ENCODE measurements at regions of chr16 and their contacts with region 1.

Region 1: GRCh38 chr16:89289428-89290395 is 72.2 kb downstream of the ZNF778 start:
- DNase-seq: peak; percentile 73 to 99
- ATAC-seq: peak; percentile 85 to 93
- H3K4me3 ChIP-seq: no peak overlapping the region
- H3K27ac ChIP-seq: peak overlapping the region in 1 of 2 experiments; percentile 42; a peak in 2 of 6 replicates
- H3K4me1 ChIP-seq: peaks cover 4% of the 10 kb centered on the region; the same call in 1 of the 3 replicates
- CTCF ChIP-seq: peak; percentile 82
- EP300 ChIP-seq: no peak
- POLR2A ChIP-seq: no peak
- RAD21 ChIP-seq: peak; percentile 70 to 73

Region 2: DNA sequence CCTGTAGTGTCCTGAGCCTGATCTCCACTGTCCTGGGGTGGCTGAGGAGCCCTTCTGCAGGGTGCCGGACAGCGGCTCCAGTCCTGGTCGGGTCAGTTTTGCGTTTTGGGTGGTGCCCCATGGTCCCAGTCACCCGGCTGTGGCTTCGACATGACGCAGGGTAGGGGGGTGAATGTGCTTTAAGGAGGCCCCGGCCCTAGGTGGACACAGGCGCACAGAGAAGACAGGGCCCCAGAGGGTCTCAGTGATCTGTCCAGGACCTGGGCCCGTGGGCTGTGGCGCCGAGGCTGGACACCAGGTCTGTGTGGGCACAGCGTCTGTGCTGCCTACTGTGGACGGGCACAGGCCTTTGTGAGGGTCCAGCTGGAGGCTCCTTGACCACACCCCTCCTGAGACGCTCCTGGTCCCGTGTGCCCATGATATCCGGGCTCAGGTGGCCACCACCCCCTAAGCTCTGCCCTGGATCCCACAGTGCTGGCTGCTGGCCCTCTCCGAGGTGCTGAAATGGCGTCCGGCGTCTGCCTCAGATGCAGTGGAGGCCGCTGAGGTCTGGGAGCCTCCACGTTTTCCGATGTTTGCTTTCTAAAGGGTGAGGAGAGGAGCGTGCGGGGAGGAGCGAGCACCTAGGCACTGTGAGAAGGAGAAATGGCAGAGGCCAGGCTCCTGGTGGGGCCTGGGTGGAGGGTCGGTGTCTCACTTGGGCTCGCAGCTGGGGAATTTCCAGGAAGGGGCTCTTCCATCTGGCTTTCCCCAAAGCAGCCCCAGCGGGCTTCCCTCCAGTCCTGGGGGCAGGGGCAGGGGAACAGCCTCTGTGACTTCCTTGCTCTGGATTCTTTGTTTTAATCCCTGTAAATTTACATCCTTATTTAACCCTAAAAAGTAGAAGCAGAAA is 252.2 kb before region 1 on chr16:
- CTCF ChIA-PET with region 1: no interaction called
- POLR2A ChIA-PET with region 1: no interaction called
- DNase-seq: peak; percentile 33 to 38
- ATAC-seq: peak; percentile 73 to 74
- H3K4me3 ChIP-seq: no peak overlapping the region
- H3K27ac ChIP-seq: no peak overlapping the region
- H3K4me1 ChIP-seq: no peaks in the 10 kb centered on the region
- CTCF ChIP-seq: no peak
- EP300 ChIP-seq: no peak
- POLR2A ChIP-seq: no peak
- RAD21 ChIP-seq: no peak

Region 3: GRCh38 chr16:89115216-89115861 is 174.4 kb before region 1 on chr16:
- CTCF ChIA-PET with region 1: no interaction called
- POLR2A ChIA-PET with region 1: no interaction called
- DNase-seq: no peak
- ATAC-seq: no peak
- H3K4me3 ChIP-seq: no peak overlapping the region
- H3K27ac ChIP-seq: no peak overlapping the region
- H3K4me1 ChIP-seq: no peaks in the 10 kb centered on the region
- CTCF ChIP-seq: no peak
- EP300 ChIP-seq: no peak
- POLR2A ChIP-seq: no peak
- RAD21 ChIP-seq: no peak

Region 4: DNA sequence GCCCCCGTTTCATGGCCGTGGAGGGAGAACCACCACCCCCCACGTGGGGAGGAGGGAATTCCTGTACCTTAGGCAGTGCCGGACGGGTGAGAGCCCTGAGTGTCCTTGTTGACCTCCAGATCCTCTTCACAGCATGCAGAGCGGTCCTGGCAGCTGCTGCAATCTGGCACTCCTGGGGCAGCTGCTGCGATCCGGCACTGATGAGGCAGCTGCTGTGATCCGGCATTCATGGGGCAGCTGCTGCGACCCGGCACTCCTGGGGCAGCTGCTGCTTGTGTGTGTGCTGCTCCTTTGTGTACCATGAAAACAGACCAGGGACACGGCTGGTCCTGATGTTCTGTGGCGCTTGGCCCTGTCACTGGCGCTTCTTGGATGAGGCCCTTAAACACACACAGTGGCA is 59.5 kb before region 1 on chr16:
- CTCF ChIA-PET with region 1: no interaction called
- POLR2A ChIA-PET with region 1: no interaction called
- DNase-seq: no peak
- ATAC-seq: no peak
- H3K4me3 ChIP-seq: no peak overlapping the region
- H3K27ac ChIP-seq: no peak overlapping the region
- H3K4me1 ChIP-seq: no peaks in the 10 kb centered on the region
- CTCF ChIP-seq: no peak
- EP300 ChIP-seq: no peak
- POLR2A ChIP-seq: no peak
- RAD21 ChIP-seq: no peak

Region 5: GRCh38 chr16:89261691-89262563 is 27.8 kb before region 1 on chr16:
- CTCF ChIA-PET with region 1: interaction called, 25 read pairs
- POLR2A ChIA-PET with region 1: no interaction called
- DNase-seq: no peak
- ATAC-seq: peak; percentile 6 to 9; a peak in 3 of 6 replicates
- H3K4me3 ChIP-seq: no peak overlapping the region
- H3K27ac ChIP-seq: no peak overlapping the region; a peak in 1 of 6 replicates
- H3K4me1 ChIP-seq: peaks cover 5% of the 10 kb centered on the region; the same call in 2 of the 3 replicates
- CTCF ChIP-seq: no peak
- EP300 ChIP-seq: no peak
- POLR2A ChIP-seq: no peak
- RAD21 ChIP-seq: no peak

Region 6: GRCh38 chr16:89277641-89278341 is 11.9 kb before region 1 on chr16:
- CTCF ChIA-PET with region 1: interaction called, 80 read pairs
- POLR2A ChIA-PET with region 1: no interaction called
- DNase-seq: no peak
- ATAC-seq: no peak
- H3K4me3 ChIP-seq: no peak overlapping the region
- H3K27ac ChIP-seq: no peak overlapping the region
- H3K4me1 ChIP-seq: no peaks in the 10 kb centered on the region
- CTCF ChIP-seq: no peak
- EP300 ChIP-seq: no peak
- POLR2A ChIP-seq: no peak
- RAD21 ChIP-seq: no peak

Region 7: GRCh38 chr16:89315791-89316581 is 26.3 kb after region 1 on chr16:
- CTCF ChIA-PET with region 1: interaction called, 52 read pairs
- POLR2A ChIA-PET with region 1: interaction called, 6 read pairs
- DNase-seq: peak in 1 of 2 experiments; percentile 58
- ATAC-seq: no peak
- H3K4me3 ChIP-seq: no peak overlapping the region
- H3K27ac ChIP-seq: peak overlapping the region; percentile 56 to 99
- H3K4me1 ChIP-seq: peaks cover 75% of the 10 kb centered on the region
- CTCF ChIP-seq: no peak
- EP300 ChIP-seq: no peak
- POLR2A ChIP-seq: no peak
- RAD21 ChIP-seq: no peak

Region 8: DNA sequence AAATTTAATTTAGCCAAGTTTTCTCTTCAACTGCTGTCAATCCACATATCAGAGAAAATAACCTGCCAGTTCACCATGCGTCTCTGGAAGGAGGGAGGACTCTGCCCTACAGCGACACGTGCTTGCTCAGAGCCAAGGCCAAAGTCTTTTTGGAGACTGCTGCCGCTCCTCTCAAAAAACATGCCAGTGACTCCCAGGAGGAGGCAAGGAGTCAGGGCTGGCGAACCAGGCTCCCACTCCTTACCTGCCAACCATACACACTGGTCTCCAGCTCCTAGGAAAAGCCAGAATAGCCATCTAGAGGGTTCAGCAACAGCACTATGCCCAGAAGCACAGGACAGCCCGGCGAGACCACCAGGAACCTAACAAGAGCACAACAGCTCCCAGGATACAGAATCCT is 127.6 kb after region 1 on chr16:
- CTCF ChIA-PET with region 1: no interaction called
- POLR2A ChIA-PET with region 1: no interaction called
- DNase-seq: no peak
- ATAC-seq: no peak
- H3K4me3 ChIP-seq: no peak overlapping the region
- H3K27ac ChIP-seq: no peak overlapping the region
- H3K4me1 ChIP-seq: peaks cover 31% of the 10 kb centered on the region; the same call in 2 of the 3 replicates
- CTCF ChIP-seq: no peak
- EP300 ChIP-seq: no peak
- POLR2A ChIP-seq: no peak
- RAD21 ChIP-seq: no peak